ENCODE measurements at regions of chr13 and their contacts with region 1.

Region 1: DNA sequence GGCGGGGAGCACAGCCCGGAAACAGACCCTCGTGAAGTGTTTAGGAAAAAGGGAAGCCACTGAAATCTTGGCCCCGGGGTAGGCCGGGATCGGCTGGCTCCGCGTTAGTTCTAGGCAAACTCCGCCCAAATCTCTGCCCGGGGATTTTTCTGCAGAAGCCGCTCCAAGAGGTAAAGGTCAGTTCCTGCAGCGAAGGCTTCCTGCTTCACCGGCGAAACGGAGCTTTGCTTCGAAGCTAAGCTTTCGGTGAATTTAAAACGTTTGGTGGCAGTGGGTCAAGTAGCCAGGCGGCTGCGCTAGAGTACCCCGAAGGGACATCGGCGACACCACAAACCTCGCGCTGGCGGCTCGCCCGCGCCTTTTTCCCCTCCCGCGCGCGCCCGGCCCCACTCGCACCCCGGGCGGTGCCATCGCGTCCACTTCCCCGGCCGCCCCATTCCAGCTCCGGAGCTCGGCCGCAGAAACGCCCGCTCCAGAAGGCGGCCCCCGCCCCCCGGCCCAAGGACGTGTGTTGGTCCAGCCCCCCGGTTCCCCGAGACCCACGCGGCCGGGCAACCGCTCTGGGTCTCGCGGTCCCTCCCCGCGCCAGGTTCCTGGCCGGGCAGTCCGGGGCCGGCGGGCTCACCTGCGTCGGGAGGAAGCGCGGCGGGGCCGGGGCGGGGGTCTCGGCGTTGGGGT is 441 bp downstream of the GJB2 start:
- DNase-seq: peak; percentile 65
- ATAC-seq: peak; percentile 28
- H3K4me3 ChIP-seq: peak overlapping the region; percentile 73
- H3K27ac ChIP-seq: peak overlapping the region; percentile 86
- H3K4me1 ChIP-seq: peaks cover 31% of the 10 kb centered on the region
- H3K27me3 ChIP-seq: no peaks in the 10 kb centered on the region
- CTCF ChIP-seq: no peak

Region 2: DNA sequence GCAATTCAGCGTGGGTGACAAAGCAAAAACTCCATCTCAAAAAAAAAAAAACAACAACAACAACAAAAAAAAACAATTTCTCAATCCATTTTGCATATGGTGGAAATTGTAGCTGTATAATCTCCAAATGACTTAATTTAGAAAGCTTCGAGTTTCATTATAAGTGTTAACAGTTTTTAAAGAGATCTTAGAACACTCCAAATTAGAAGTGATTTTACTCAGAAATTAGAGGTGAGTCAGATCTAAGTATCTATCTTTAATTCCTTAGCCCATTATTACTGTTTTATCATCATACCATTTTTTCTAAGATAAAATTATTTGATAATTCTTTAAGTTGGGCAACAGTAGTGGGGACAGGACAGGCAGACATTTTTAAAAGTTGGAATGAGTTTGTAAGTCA is 173.3 kb before region 1 on chr13:
- CTCF ChIA-PET with region 1: no interaction called
- POLR2A ChIA-PET with region 1: no interaction called
- intact Hi-C with region 1: no loop called
- DNase-seq: no peak
- ATAC-seq: no peak
- H3K4me3 ChIP-seq: no peak overlapping the region
- H3K27ac ChIP-seq: no peak overlapping the region
- H3K4me1 ChIP-seq: peaks cover 13% of the 10 kb centered on the region
- H3K27me3 ChIP-seq: no peaks in the 10 kb centered on the region
- CTCF ChIP-seq: no peak

Region 3: DNA sequence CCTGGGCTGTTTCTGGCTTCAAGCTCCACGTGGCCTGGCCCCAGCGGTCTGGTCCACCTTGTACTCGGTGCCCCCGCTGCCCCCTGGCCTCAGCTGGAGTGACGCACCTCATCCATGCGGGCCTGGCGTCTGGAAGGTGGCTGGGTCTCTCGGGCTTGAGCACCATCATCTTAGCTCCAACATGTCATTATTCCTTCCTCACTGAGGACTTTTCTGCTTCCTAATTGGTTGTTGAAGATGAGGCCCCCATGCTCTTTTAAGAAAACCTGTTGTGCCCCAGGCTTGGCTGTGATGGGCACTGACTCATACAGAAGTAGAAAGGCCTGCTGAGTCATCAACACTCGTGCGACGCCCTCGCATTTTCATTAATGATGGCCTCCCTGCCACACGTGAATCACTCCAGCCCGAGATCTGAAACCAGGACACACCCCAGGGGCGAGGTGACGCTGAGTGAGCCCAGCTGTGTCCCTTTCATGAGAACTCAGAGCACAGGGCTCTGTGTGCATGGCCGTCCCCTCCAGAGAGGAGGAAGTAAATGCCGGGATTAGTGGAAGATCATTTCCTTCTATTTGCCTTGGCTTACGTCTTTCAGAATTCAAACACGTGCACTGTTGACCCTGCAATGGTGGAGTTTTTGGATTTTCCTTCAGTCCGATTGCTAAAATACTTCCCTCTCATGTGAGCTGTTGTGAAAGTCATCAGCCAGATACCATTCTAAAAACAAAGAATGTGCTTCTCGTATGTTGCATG is 17.5 kb before region 1 on chr13:
- CTCF ChIA-PET with region 1: no interaction called
- POLR2A ChIA-PET with region 1: no interaction called
- intact Hi-C with region 1: loop called (anchors 1 kb)
- DNase-seq: peak; percentile 99
- ATAC-seq: peak; percentile 94
- H3K4me3 ChIP-seq: peak overlapping the region; percentile 22; the same call in 1 of the 2 replicates
- H3K27ac ChIP-seq: peak overlapping the region; percentile 72
- H3K4me1 ChIP-seq: peaks cover 30% of the 10 kb centered on the region
- H3K27me3 ChIP-seq: no peaks in the 10 kb centered on the region
- CTCF ChIP-seq: no peak

Region 4: GRCh38 chr13:20247403-20247802 is 55.1 kb after region 1 on chr13:
- CTCF ChIA-PET with region 1: no interaction called
- POLR2A ChIA-PET with region 1: no interaction called
- intact Hi-C with region 1: no loop called
- DNase-seq: no peak
- ATAC-seq: no peak
- H3K4me3 ChIP-seq: no peak overlapping the region
- H3K27ac ChIP-seq: no peak overlapping the region
- H3K4me1 ChIP-seq: no peaks in the 10 kb centered on the region
- H3K27me3 ChIP-seq: no peaks in the 10 kb centered on the region
- CTCF ChIP-seq: no peak

Region 5: GRCh38 chr13:20369886-20370361 is 177.6 kb after region 1 on chr13:
- CTCF ChIA-PET with region 1: no interaction called
- POLR2A ChIA-PET with region 1: no interaction called
- intact Hi-C with region 1: loop called (anchors 5 kb)
- DNase-seq: peak; percentile 97
- ATAC-seq: peak; percentile 78
- H3K4me3 ChIP-seq: 0 out of 2 replicates have a peak overlapping the region, but pooled peaks have one; percentile 4
- H3K27ac ChIP-seq: peak overlapping the region; percentile 98
- H3K4me1 ChIP-seq: peaks cover 28% of the 10 kb centered on the region
- H3K27me3 ChIP-seq: no peaks in the 10 kb centered on the region
- CTCF ChIP-seq: no peak

Region 6: GRCh38 chr13:20391597-20392452 is 199.5 kb after region 1 on chr13:
- CTCF ChIA-PET with region 1: no interaction called
- POLR2A ChIA-PET with region 1: no interaction called
- intact Hi-C with region 1: no loop called
- DNase-seq: peak; percentile 76
- ATAC-seq: peak; percentile 18; the same call in 1 of the 2 replicates
- H3K4me3 ChIP-seq: no peak overlapping the region
- H3K27ac ChIP-seq: no peak overlapping the region
- H3K4me1 ChIP-seq: peaks cover 21% of the 10 kb centered on the region
- H3K27me3 ChIP-seq: no peaks in the 10 kb centered on the region
- CTCF ChIP-seq: no peak

Region 7: GRCh38 chr13:20424949-20425348 is 232.7 kb after region 1 on chr13:
- CTCF ChIA-PET with region 1: interaction called, 7 read pairs
- POLR2A ChIA-PET with region 1: no interaction called
- intact Hi-C with region 1: loop called (anchors 5 kb)
- DNase-seq: no peak
- ATAC-seq: no peak
- H3K4me3 ChIP-seq: no peak overlapping the region
- H3K27ac ChIP-seq: no peak overlapping the region
- H3K4me1 ChIP-seq: peaks cover 18% of the 10 kb centered on the region
- H3K27me3 ChIP-seq: no peaks in the 10 kb centered on the region
- CTCF ChIP-seq: no peak

Region 8: DNA sequence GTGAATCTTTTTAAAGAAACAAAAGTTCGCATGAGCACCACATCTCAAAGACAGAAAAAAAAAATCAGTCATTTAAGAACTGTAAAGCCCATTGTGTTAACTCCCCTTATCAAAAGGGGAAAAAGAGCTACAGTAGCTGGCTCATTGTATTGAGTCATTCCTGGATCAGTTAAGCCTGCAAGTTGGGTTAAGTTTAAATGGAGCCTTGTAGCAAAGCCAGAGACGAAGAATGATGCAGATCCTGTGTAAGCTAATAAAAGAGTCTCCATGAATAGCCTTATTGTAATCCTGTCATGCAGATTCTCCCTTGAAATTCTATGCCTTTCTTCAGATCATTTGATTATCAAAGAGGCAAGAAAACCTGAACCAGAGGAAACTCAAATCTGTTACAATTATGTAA is 249.6 kb after region 1 on chr13:
- CTCF ChIA-PET with region 1: interaction called, 7 read pairs
- POLR2A ChIA-PET with region 1: no interaction called
- intact Hi-C with region 1: loop called (anchors 5 kb)
- DNase-seq: peak; percentile 95
- ATAC-seq: peak; percentile 94
- H3K4me3 ChIP-seq: peak overlapping the region; percentile 17; the same call in 1 of the 2 replicates
- H3K27ac ChIP-seq: peak overlapping the region; percentile 95
- H3K4me1 ChIP-seq: peaks cover 31% of the 10 kb centered on the region
- H3K27me3 ChIP-seq: no peaks in the 10 kb centered on the region
- CTCF ChIP-seq: no peak

Region 9: GRCh38 chr13:20566898-20567874 is 374.9 kb after region 1 on chr13 and contains the start of gene IFT88:
- CTCF ChIA-PET with region 1: no interaction called
- POLR2A ChIA-PET with region 1: no interaction called
- intact Hi-C with region 1: loop called (anchors 5 kb)
- DNase-seq: peak; percentile 89
- ATAC-seq: peak; percentile 80
- H3K4me3 ChIP-seq: peak within 1 kb of the TSS; percentile 77
- H3K27ac ChIP-seq: peak within 1 kb of the TSS; percentile 87
- H3K4me1 ChIP-seq: peaks cover 13% of the 10 kb centered on the region
- H3K27me3 ChIP-seq: no peaks in the 10 kb centered on the region
- CTCF ChIP-seq: no peak
- total RNA-seq, gene IFT88: 11.9 and 12.6 TPM in 2 replicates

Region 10: GRCh38 chr13:20773194-20774080 is 581.1 kb after region 1 on chr13 and contains the start of gene EEF1AKMT1:
- CTCF ChIA-PET with region 1: no interaction called
- POLR2A ChIA-PET with region 1: no interaction called
- intact Hi-C with region 1: loop called (anchors 5 kb)
- DNase-seq: peak; percentile 96
- ATAC-seq: peak; percentile 94
- H3K4me3 ChIP-seq: peak within 1 kb of the TSS; percentile 77
- H3K27ac ChIP-seq: peak within 1 kb of the TSS; percentile 65
- H3K4me1 ChIP-seq: peaks cover 13% of the 10 kb centered on the region
- H3K27me3 ChIP-seq: no peaks in the 10 kb centered on the region
- CTCF ChIP-seq: no peak
- total RNA-seq, gene EEF1AKMT1: 6.2 and 10.6 TPM in 2 replicates